ENCODE measurements at regions of chr2 and their contacts with region 1.

Region 1: DNA sequence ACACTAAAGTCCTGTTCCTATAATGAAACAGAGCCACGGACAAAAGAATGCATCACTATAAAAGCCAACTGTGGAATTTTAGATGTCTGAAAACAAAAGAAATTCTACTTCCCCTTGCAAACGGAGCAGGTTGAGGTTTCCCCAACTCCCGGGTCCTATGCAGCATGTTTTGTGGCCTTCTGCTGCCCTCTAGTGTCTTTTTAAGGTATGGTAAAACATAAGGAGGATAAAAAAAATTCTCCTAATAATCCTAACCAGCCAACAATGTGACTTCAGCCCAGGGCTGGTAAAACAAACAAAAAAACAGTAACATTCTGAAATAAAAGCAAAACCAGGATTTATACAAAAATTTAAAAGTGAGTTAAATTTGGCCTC is 539.5 kb downstream of the NRXN1 start:
- DNase-seq: peak; percentile 67
- H3K4me3 ChIP-seq: no peak overlapping the region
- H3K27ac ChIP-seq: no peak overlapping the region
- H3K4me1 ChIP-seq: no peaks in the 10 kb centered on the region
- CTCF ChIP-seq: peak; percentile 88

Region 2: DNA sequence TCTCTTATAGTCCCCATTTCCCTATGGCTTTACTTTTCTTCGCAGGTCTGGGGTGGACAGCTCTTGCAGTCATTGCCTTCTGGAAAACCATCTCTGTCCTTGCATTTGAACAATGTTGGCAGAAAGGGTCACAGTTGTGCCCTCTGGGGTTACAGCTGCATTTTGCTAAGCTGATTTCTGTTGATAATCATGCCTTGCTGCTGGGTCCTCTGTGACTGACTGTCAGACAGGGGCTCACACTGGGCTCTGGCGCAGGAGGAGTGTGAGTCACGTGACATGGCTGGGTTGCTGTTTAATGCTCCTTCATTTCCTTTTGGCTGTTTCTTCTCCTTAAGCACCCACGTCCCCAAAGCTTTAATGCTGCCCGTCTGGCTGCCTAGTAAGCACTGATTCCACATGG is 1540.3 kb before region 1 on chr2:
- CTCF ChIA-PET with region 1: no interaction called
- POLR2A ChIA-PET with region 1: no interaction called
- intact Hi-C with region 1: loop called (anchors 5 kb)
- DNase-seq: no peak
- H3K4me3 ChIP-seq: no peak overlapping the region
- H3K27ac ChIP-seq: no peak overlapping the region
- H3K4me1 ChIP-seq: no peaks in the 10 kb centered on the region
- CTCF ChIP-seq: no peak

Region 3: DNA sequence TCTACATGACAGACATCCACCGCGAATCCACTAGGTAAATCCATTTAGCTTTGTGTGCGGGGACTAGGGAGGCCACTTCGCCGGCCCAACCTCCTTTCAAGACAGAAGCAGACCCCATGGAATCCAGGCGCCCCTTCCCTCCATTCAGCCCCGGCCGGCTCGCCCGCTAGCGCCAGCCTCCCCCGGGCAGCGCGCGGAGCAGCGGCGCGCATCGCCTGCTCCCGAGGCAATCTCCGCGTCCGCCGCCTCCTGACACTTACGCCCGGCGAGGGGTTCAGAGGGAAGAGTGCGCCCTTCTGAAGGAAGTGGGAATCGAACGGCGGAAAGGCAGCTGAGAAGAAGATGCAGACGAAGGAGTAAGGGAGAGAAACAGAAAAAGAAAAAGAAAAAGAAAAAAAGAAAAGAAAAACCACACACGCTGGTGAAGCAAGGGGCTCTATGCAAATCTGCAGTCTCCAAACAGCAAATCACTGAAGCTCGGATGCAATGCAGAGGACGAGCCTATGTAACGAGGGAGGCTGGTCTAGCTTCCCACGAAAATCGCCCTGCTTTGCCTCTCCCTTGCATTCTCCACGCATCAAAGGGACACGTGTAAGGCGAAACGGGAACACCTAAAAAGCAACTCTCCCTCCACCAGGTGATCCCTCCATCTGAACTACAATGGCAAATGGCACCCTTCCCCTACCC is 145.0 kb before region 1 on chr2:
- CTCF ChIA-PET with region 1: no interaction called
- POLR2A ChIA-PET with region 1: no interaction called
- intact Hi-C with region 1: loop called (anchors 10 kb)
- DNase-seq: no peak
- H3K4me3 ChIP-seq: no peak overlapping the region
- H3K27ac ChIP-seq: no peak overlapping the region
- H3K4me1 ChIP-seq: no peaks in the 10 kb centered on the region
- CTCF ChIP-seq: no peak

Measured in OCI-LY7 (cell line).